ENCODE measurements at regions of chr19 and their contacts with region 1.

Region 1: GRCh38 chr19:2618611-2619010 is 83.9 kb downstream of the GNG7 start:
- DNase-seq: peak; percentile 78
- ATAC-seq: no peak
- H3K4me3 Mint-ChIP-seq: peak overlapping the region; percentile 47
- H3K27ac Mint-ChIP-seq: peak overlapping the region; percentile 100
- H3K4me1 Mint-ChIP-seq: peaks cover 71% of the 10 kb centered on the region
- H3K27me3 Mint-ChIP-seq: no peaks in the 10 kb centered on the region

Region 2: GRCh38 chr19:2461751-2462634 is 156.6 kb before region 1 on chr19:
- CTCF ChIA-PET with region 1: interaction called, 11 read pairs
- DNase-seq: peak; percentile 85
- ATAC-seq: peak; percentile 86
- H3K4me3 Mint-ChIP-seq: peak overlapping the region; percentile 89
- H3K27ac Mint-ChIP-seq: peak overlapping the region; percentile 89
- H3K4me1 Mint-ChIP-seq: peaks cover 15% of the 10 kb centered on the region
- H3K27me3 Mint-ChIP-seq: no peaks in the 10 kb centered on the region

Region 3: DNA sequence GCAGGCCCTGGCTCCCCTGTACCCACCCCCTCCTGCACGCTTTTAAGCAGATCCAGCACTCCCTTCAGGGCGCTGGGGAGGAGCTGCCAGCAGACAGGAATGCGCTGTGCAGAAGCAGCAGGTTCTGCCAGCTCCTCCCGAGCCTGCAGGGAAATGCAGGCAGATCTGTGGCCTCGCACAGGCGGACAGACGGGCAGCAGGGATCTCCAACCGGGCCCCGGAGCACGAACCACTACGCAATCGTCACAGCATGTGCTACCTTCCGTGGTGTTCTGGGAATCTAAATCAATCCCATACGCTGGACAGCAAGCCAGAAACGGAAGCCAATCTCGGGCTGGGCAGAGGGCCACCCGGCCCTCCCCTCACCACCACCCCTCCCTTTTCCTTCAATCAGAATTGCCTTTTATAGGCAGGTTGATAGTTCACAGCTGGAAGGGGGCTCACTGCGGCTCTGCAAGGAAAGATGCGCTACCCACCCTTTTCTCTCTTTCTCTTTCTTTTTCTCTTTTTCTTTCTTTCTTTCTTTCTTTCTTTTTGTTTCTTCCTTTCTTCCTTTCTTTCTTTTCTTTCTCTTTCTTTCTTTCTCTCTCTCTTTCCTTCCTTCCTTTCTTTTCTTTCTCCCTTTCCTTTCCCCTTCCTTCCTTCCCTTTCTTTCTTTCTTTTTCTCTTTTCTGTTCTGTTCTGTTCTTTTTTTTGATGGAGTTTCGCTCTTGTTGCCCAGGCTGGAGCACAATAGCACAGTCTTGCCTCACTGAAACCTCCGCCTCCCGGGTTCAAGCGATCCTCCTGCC is 16.0 kb before region 1 on chr19:
- CTCF ChIA-PET with region 1: interaction called, 434 read pairs
- DNase-seq: no peak
- ATAC-seq: no peak
- H3K4me3 Mint-ChIP-seq: no peak overlapping the region
- H3K27ac Mint-ChIP-seq: no peak overlapping the region
- H3K4me1 Mint-ChIP-seq: peaks cover 19% of the 10 kb centered on the region
- H3K27me3 Mint-ChIP-seq: peaks cover 13% of the 10 kb centered on the region

Measured in activated CD8-positive, alpha-beta memory T cell treated with anti-CD3 and anti-CD28 coated beads, Interleukin-2, amount 10 ng/mL, durations not matched to agents 7 days and 5 days (primary cell).